ENCODE measurements at regions of chr10 and their contacts with region 1.

Region 1: DNA sequence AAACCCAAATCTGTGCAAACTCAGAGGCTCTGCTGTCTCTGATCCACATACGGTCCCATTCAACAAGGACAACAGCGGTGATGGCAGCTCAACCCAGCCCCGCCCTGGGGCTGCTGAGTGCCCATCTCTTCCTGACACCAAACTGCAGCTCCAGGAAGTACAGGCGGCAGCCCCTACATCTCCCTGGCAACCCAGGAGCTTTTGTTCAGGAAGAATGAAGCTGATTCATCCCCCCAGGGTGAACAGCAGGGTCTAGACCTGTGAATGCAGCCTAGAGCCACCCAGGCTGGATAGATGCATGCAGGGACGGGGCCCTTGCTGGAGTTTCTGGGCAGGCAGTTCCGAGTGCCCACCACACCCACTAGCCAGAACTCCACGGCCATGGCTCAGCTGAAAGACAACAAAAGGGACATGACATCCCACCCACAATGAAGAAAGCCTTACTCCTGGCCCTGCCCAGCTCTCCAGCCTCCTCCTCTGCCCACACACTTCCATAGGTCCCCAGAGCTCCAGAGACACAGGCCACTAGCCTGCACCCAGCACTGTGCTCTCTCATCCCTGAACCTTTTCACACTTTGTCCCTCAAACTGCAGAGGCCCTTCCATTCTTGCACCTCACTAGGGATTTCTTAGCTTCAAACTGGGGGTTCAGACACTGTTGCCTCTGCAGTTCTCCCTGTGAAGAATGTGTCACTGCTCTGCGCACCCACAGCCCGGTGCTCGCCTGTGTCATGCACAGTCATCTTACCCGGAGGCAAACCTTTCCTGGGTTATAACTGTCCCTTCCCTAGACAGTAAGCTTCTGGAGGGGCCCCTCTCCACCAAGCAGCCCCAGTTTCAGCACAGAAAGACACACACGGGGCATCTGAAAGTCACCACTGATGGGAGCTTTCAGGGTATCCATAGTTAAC is 99.1 kb downstream of the GRID1 start:
- DNase-seq: peak in 1 of 2 donors; percentile 0
- H3K4me3 ChIP-seq: no peak overlapping the region
- H3K27ac ChIP-seq: no peak overlapping the region
- H3K4me1 ChIP-seq: peaks cover 26 to 36% of the 10 kb centered on the region in 2 donors
- H3K27me3 ChIP-seq: no peaks in the 10 kb centered on the region
- CTCF ChIP-seq: no peak
- POLR2A ChIP-seq: no peak

Region 2: GRCh38 chr10:86163522-86164173 is 103.9 kb before region 1 on chr10:
- intact Hi-C with region 1: no loop called
- DNase-seq: no peak
- H3K4me3 ChIP-seq: no peak overlapping the region
- H3K27ac ChIP-seq: peak overlapping the region in 1 of 3 donors; percentile 1
- H3K4me1 ChIP-seq: peaks cover 0 to 15% of the 10 kb centered on the region in 2 donors
- H3K27me3 ChIP-seq: no peaks in the 10 kb centered on the region
- CTCF ChIP-seq: no peak
- POLR2A ChIP-seq: no peak

Region 3: GRCh38 chr10:86317949-86318725 is 50.6 kb after region 1 on chr10:
- intact Hi-C with region 1: loop called (anchors 5 kb)
- DNase-seq: peak; percentile 37 to 39
- H3K4me3 ChIP-seq: no peak overlapping the region
- H3K27ac ChIP-seq: peak overlapping the region in 1 of 3 donors; percentile 1
- H3K4me1 ChIP-seq: peaks cover 29 to 41% of the 10 kb centered on the region in 2 donors
- H3K27me3 ChIP-seq: no peaks in the 10 kb centered on the region
- CTCF ChIP-seq: no peak
- POLR2A ChIP-seq: no peak

Measured in thyroid gland (tissue), 4 donors.